Ascending aorta (tissue), 2 donors: ENCODE measurements at regions of chr19 and their contacts with region 1.

Region 1: GRCh38 chr19:10960314-10961072 is at the start of gene SMARCA4:
- DNase-seq: peak; percentile 75 to 98
- H3K4me3 ChIP-seq: peak within 1 kb of the TSS; percentile 79 to 100
- H3K27ac ChIP-seq: peak within 1 kb of the TSS; percentile 87 to 92
- H3K4me1 ChIP-seq: peaks cover 3 to 10% of the 10 kb centered on the region in 2 donors
- H3K27me3 ChIP-seq: no peaks in the 10 kb centered on the region
- CTCF ChIP-seq: no peak
- total RNA-seq, gene SMARCA4: 89.5 TPM

Region 2: DNA sequence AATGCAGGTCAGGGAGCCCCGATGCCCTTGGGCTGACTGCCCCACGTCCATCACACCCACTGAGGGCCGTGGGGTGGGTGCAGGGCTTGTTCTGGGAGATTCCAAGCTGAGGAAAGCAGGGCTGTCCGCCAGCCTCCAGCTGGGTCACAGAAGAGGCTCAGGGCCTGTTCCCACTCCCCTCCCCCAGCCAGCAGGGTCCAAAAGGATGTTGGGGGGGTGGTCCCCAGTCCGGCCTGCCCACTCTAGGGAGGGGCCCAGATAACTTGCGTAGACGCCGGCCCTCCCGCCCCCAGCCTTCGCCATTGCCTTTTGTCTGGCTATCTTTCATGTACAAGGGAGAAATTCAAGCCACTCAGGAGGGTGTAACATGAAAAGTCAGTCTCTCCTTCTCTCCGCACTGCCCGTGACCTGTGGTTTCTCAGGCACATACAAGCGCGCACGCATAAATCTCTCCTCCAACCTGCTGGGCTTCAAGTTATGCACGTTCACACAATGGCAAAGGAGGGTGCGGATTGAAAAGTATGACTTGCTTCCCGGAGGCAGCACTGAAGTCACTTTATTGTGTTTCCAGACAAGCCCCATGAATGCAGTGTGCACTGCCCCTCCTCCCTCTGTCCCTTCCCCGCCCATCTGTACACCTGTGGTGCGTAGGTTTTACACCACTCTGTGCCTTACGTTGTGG is 68.9 kb before region 1 on chr19:
- intact Hi-C with region 1: no loop called
- DNase-seq: no peak
- H3K4me3 ChIP-seq: no peak overlapping the region
- H3K27ac ChIP-seq: no peak overlapping the region
- H3K4me1 ChIP-seq: peaks cover 0 to 2% of the 10 kb centered on the region in 2 donors
- H3K27me3 ChIP-seq: no peaks in the 10 kb centered on the region
- CTCF ChIP-seq: no peak

Region 3: GRCh38 chr19:10928525-10929401 is 31.7 kb before region 1 on chr19 and contains the starts of genes TIMM29 and YIPF2:
- intact Hi-C with region 1: loop called (anchors 2 kb)
- DNase-seq: peak; percentile 93 to 98
- H3K4me3 ChIP-seq: peak within 1 kb of the TSS; percentile 70 to 95
- H3K27ac ChIP-seq: peak within 1 kb of the TSS; percentile 83 to 90
- H3K4me1 ChIP-seq: peaks cover 11 to 20% of the 10 kb centered on the region in 2 donors
- H3K27me3 ChIP-seq: no peaks in the 10 kb centered on the region
- CTCF ChIP-seq: no peak
- total RNA-seq, gene TIMM29: 66.9 TPM
- total RNA-seq, gene YIPF2: 139 TPM